Activated CD4-positive, alpha-beta memory T cell treated with anti-CD3 and anti-CD28 coated beads for 36 hours (primary cell): ENCODE measurements at regions of chr2 and their contacts with region 1.

Region 1: DNA sequence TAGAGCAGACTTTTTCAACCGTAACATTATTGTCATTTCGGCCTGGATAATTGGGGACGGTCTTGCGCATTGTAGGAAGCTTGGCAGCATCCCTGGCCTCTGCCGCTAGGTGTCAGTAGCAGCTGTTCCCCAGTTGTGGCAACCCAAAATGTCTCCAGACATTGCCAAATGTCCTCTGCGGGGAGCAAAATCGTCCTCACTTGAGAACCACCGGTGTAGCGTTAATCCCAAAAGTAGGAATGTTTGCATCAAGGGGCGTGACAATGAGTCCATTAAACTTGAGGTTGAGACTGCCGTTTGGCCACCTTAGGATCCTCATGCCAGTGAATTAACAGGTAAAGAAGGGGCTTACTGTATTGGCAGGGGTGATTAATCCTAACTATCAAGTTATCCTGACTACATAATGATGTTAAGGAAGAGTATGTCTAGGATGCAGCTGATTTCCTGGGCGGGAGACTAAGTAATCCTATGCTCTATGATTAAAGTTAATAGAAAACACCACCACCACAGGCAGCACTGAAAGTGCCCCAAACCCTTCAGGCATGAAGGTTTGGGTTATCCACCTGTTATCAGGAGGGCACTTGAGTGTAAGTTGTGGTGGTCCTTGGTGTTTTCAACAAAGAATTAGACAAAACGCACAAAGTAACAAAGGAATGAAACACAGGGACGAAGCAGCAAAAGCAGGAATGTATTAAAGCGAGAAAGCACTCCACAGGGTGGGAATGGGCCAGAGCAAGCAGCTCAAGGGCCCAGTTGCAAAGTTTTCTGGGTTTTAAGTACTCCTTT is 4.9 kb upstream of the ZC3H8 start:
- DNase-seq: peak; percentile 90
- H3K4me3 Mint-ChIP-seq: peak overlapping the region; percentile 54
- H3K27ac Mint-ChIP-seq: no peak overlapping the region
- H3K4me1 Mint-ChIP-seq: peaks cover 13% of the 10 kb centered on the region
- H3K27me3 Mint-ChIP-seq: no peaks in the 10 kb centered on the region

Region 2: DNA sequence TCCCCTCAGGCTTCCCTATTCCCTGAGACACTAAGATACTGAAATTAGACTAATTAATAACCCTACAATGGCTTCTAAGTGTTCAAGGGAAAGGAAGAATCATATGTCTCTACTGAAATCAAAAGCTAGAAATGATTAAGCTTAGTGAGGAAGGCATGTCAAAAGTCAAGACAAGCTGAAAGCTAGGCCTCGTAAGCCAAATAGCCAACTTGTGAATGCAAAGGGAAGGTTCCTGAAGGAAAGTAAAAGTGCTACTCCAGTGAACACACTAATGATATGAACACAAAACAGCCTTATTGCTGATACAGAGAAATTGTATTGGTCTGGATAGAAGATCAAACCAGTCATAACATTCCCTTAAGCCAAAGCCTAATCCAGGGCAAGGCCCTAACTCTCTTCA is 14.8 kb before region 1 on chr2:
- CTCF ChIA-PET with region 1: interaction called, 22 read pairs
- POLR2A ChIA-PET with region 1: interaction called, 6 read pairs
- intact Hi-C with region 1: no loop called
- DNase-seq: no peak
- H3K4me3 Mint-ChIP-seq: no peak overlapping the region
- H3K27ac Mint-ChIP-seq: peak overlapping the region; percentile 54
- H3K4me1 Mint-ChIP-seq: peaks cover 22% of the 10 kb centered on the region
- H3K27me3 Mint-ChIP-seq: no peaks in the 10 kb centered on the region

Region 3: DNA sequence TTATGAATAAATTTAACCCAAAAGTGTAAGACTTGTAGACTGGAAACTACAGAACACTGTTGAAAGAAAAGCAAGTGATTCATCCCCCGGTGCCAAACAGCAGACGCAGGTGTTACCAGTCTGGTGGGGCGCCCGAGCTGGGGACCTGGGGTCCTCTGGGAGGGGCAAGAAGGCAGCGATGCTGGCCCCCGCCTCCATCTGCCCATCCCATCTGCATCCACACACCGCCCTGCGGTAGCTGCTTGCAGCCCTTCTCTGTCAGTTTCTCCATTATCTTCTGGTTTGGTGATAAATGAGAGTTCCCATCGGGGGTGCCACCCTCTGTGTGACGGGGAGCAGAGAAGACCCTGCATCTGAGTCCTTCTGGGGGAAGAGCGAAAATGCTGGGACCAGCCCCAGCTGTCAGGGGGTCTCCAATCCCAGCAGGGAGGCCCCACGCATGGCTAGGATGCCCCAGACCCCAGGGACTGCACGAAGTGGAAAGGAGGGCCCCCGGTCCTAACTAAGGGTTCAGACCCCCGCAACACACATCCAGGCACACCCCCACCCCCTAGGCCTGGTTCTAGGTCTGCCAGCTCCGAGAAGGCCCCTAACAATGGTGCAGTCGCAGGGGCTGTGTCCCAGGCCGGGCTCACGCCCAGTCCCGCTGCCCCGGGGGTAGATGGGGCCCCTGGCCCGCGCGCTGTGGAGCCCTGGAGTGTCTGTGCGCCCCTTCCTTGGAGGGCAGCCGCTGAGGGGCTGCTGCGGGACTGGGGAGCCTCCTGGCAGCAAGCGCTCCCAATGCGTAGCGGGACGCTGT is 174.4 kb after region 1 on chr2:
- CTCF ChIA-PET with region 1: interaction called, 5 read pairs
- POLR2A ChIA-PET with region 1: no interaction called
- intact Hi-C with region 1: loop called (anchors 2 kb)
- DNase-seq: no peak
- H3K4me3 Mint-ChIP-seq: no peak overlapping the region
- H3K27ac Mint-ChIP-seq: no peak overlapping the region
- H3K4me1 Mint-ChIP-seq: peaks cover 14% of the 10 kb centered on the region
- H3K27me3 Mint-ChIP-seq: peaks cover 9% of the 10 kb centered on the region